ENCODE measurements at regions of chr4 and their contacts with region 1.

Region 1: DNA sequence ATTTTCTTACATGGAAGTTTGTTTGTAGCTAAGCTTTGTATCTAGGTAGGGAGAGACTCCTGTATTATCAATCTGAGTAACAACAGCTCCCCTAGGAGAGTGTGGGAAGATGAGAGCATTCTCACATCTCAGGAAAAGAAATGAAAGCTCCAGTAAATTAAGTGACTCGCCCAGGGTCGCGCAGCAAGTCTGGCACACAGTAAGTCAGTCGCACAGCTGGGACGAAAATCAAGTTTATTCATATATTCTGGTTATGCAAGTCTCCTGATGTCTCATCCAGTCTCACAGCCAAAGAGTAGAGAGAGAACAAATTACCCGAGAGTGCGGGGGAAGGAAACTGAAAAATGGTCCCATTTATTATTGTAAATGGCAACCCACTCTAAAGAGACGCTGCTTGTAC is 216.1 kb downstream of the STK32B start:
- DNase-seq: no peak
- H3K4me3 ChIP-seq: no peak overlapping the region
- H3K27ac ChIP-seq: no peak overlapping the region
- H3K4me1 ChIP-seq: no peaks in the 10 kb centered on the region
- H3K27me3 ChIP-seq: no peaks in the 10 kb centered on the region
- CTCF ChIP-seq: no peak

Region 2: GRCh38 chr4:4901877-4902276 is 365.5 kb before region 1 on chr4:
- CTCF ChIA-PET with region 1: no interaction called
- dilution Hi-C with region 1: no loop called
- in situ Hi-C with region 1: no loop called
- intact Hi-C with region 1: no loop called
- DNase-seq: no peak
- H3K4me3 ChIP-seq: no peak overlapping the region
- H3K27ac ChIP-seq: no peak overlapping the region
- H3K4me1 ChIP-seq: no peaks in the 10 kb centered on the region
- H3K27me3 ChIP-seq: no peaks in the 10 kb centered on the region
- CTCF ChIP-seq: no peak

Region 3: GRCh38 chr4:5212255-5213013 is 55.0 kb before region 1 on chr4:
- CTCF ChIA-PET with region 1: no interaction called
- dilution Hi-C with region 1: loop called (anchors 10 kb)
- in situ Hi-C with region 1: no loop called
- intact Hi-C with region 1: no loop called
- DNase-seq: no peak
- H3K4me3 ChIP-seq: no peak overlapping the region
- H3K27ac ChIP-seq: no peak overlapping the region
- H3K4me1 ChIP-seq: no peaks in the 10 kb centered on the region
- H3K27me3 ChIP-seq: no peaks in the 10 kb centered on the region
- CTCF ChIP-seq: no peak

Measured in mammary epithelial cell (primary cell).